AG04449 (cell line): ENCODE measurements at regions of chr5 and their contacts with region 1.

Region 1: GRCh38 chr5:72307968-72308852 is 11.8 kb downstream of the MRPS27 start:
- DNase-seq: peak; percentile 81
- H3K4me3 ChIP-seq: peak overlapping the region; percentile 80
- CTCF ChIP-seq: peak; percentile 94

Region 2: DNA sequence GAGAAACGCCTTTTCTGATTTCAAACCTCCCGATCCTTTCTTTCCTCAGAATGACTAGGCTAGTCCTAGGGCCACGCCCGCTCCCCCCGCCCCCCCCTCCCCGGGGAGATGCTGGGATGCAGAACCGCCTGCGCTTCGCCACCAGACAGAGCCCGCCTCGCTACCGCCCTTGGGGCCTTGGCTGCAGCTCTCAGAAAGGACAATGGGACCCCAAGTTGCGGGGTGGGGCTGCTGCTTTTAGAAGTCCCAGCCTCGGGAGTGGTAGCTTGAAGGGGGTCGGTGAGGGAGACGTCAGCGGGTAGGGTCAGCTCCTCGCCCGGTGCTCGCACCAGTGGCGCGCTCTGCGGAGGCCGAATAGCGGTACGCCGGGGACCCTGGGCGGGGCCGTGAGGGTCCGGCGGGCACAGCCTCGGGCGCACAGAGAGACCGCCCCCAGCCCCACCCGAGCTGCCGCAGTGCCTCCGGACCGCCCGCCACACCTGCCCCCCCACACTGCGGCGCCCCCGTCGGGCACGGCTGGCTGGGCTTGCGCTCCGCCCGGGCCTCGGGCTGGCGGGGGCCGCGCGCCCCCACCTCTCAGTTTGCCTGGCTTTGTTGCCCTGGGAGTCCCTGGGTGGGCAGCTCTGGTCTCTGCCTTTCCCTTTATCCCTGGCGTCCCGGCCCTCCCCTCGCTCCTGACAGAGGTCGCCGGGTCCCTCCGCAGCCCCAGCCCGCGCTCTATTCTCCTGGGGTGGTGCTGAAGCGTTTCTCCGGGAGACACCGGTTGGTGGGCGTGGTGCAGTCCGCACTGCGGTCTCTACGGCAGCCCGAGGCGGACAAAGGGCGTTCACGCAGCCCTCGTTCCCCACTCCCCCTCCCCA is 199.8 kb before region 1 on chr5:
- CTCF ChIA-PET with region 1: interaction called, 15 read pairs
- POLR2A ChIA-PET with region 1: no interaction called
- DNase-seq: no peak
- H3K4me3 ChIP-seq: peak overlapping the region; percentile 90
- CTCF ChIP-seq: no peak

Region 3: GRCh38 chr5:72141440-72142355 is 166.5 kb before region 1 on chr5:
- CTCF ChIA-PET with region 1: interaction called, 14 read pairs
- POLR2A ChIA-PET with region 1: no interaction called
- DNase-seq: peak; percentile 89
- H3K4me3 ChIP-seq: no peak overlapping the region
- CTCF ChIP-seq: no peak

Region 4: DNA sequence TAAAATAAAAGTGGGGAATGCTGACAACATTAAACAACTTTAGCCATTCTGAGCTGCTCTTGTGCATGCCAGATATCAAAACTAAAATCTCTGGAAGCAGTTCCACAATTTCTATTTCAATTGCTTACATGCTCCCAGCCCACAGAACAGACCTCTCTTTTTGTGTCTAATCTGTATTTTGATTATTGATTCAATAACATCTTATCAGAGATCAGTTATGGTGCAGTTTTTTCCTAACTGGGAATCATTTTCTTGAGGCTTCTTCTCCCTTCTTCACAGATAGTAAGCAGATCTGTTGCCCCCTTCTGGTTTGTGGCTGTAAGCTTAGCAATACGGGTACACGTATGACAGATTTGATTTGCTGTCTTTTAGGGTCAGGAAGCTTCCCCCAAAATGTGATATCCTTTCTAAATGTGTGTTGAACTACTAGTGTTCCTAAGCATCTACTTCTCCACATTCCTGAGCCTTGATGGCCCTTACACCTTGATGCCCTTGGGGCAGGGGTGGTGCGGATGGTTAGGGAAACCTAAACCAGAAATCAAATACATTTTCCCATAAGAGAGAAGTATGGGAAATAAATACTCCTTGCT is 27.5 kb before region 1 on chr5:
- CTCF ChIA-PET with region 1: interaction called, 17 read pairs
- POLR2A ChIA-PET with region 1: interaction called, 4 read pairs
- DNase-seq: no peak
- H3K4me3 ChIP-seq: no peak overlapping the region
- CTCF ChIP-seq: peak; percentile 63

Region 5: DNA sequence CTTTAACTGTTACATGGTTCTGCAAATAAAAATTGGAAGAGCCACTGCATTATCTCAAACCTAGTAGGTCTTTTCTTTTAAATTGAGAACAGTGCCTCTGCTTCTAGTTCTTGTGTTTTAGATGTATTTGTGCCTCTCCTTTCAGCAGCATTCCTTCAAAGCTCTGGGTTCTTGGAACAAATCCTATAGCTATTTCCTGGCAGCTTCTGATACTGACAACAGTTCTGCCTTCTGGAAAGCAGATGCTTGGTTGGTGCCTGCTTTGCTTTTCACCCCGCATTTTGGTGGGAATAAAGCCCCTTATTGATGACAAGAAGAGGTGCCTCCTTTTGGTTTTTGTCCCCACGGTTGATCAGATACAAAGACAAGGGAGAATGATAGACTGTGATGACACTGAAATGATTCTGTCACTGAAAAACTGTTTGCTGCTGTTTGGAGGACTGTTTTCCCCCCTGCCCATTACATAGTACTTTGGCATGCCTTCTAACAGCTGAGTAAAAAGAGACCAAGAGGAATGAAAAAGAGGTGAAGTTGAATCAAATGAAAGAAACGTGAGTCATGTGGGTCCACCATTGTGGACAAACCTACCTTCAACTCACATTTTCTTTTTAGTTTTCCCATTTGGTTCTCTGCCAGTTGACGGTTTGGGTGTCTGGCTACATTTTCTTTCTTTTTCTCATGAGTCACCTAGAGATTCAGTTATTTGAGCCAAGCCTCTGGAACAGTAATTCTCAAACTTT is 17.5 kb after region 1 on chr5:
- CTCF ChIA-PET with region 1: interaction called, 17 read pairs
- POLR2A ChIA-PET with region 1: interaction called, 13 read pairs
- DNase-seq: no peak
- H3K4me3 ChIP-seq: peak overlapping the region; percentile 12
- CTCF ChIP-seq: no peak

Region 6: GRCh38 chr5:72417333-72418207 is 109.4 kb after region 1 on chr5:
- CTCF ChIA-PET with region 1: no interaction called
- POLR2A ChIA-PET with region 1: no interaction called
- DNase-seq: no peak
- H3K4me3 ChIP-seq: no peak overlapping the region
- CTCF ChIP-seq: no peak